Right lobe of liver (tissue), 6 donors: ENCODE measurements at regions of chr11 and their contacts with region 1.

Region 1: DNA sequence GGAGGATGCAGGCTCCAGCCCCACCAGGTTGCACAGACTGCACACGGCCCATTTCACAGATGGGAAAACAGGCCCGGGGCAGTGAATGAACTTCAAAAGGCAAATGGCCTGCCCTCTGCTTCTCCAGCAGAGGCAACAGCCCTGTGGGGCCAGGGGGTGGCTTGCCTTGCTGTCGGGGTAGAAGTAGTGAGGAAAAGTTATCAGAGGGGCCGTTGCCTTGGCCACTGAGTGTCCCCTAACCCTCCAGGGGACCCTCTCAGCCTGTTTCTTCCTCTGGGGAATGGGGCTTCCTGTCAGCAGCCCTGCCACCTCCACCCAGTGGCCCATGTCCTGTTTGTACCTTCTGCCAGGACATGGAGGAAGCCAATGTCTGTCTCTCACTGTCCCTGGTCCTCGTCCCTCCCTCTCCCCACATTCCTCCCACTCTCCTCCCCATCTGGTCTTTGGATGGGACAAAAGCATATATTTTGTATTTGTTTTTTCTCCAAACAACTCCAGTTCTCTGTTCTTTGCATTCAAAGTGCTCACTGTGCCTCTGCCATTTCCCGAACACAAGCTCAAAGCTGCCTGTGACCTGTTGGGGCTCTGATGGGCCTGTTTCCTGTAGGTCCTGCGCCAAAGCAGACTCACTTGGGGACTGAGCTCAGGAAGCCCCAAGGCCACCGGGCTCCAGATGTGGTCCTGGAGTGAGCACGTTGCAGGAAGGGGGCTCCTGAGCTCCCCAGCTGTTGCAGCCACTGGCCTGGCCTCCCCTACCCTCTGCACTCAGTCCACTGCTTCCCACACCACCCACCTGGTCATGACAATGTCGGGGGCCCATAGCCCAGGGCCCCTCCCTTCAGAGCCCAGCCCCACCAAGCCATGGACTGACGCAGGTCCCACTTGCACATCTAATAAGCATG is 9.5 kb downstream of the MAP4K2 start:
- DNase-seq: peak in 1 of 3 donors; percentile 39
- ATAC-seq: peak in 2 of 4 donors; percentile 36 to 38
- H3K4me3 ChIP-seq: no peak overlapping the region
- H3K27ac ChIP-seq: peak overlapping the region in 1 of 3 donors; percentile 23
- H3K4me1 ChIP-seq: no peaks in the 10 kb centered on the region
- H3K27me3 ChIP-seq: no peaks in the 10 kb centered on the region
- CTCF ChIP-seq: no peak
- POLR2A ChIP-seq: no peak

Region 2: GRCh38 chr11:64834723-64835620 is 41.5 kb after region 1 on chr11:
- intact Hi-C with region 1: loop called (anchors 5 to 10 kb)
- DNase-seq: no peak
- ATAC-seq: no peak
- H3K4me3 ChIP-seq: no peak overlapping the region
- H3K27ac ChIP-seq: no peak overlapping the region
- H3K4me1 ChIP-seq: no peaks in the 10 kb centered on the region
- H3K27me3 ChIP-seq: no peaks in the 10 kb centered on the region
- CTCF ChIP-seq: no peak
- POLR2A ChIP-seq: no peak